CD4-positive, alpha-beta T cell (primary cell): ENCODE measurements at regions of chr1 and their contacts with region 1.

Region 1: DNA sequence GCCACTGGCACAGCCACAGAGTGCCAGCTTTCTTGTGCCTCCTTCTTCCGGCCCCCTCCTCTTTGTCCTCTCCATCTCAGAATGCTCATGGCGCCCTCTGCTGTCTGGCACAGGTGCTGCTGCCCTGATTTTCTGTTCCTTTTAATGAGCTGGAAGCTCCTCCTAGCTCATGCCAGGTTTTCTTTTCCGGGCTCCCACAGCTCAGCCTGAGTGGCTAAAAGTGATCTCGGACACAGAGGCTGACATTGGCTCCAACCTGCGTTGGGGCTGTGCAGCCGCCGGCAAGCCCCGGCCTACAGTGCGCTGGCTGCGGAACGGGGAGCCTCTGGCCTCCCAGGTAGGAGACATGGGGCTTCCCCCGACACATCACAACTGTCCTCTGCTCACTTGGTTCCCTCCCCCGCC is 18.7 kb downstream of the CNTN2 start:
- DNase-seq: peak; percentile 55 to 82 (median 70)
- ATAC-seq: peak; percentile 92
- H3K4me3 ChIP-seq: no peak overlapping the region
- H3K4me3 Mint-ChIP-seq: no peak overlapping the region
- H3K27ac ChIP-seq: no peak overlapping the region
- H3K27ac Mint-ChIP-seq: no peak overlapping the region
- H3K4me1 ChIP-seq: peaks cover 6% of the 10 kb centered on the region
- H3K4me1 Mint-ChIP-seq: no peaks in the 10 kb centered on the region
- H3K27me3 ChIP-seq: no peaks in the 10 kb centered on the region
- H3K27me3 Mint-ChIP-seq: no peaks in the 10 kb centered on the region
- CTCF ChIP-seq: peak; percentile 78

Region 2: DNA sequence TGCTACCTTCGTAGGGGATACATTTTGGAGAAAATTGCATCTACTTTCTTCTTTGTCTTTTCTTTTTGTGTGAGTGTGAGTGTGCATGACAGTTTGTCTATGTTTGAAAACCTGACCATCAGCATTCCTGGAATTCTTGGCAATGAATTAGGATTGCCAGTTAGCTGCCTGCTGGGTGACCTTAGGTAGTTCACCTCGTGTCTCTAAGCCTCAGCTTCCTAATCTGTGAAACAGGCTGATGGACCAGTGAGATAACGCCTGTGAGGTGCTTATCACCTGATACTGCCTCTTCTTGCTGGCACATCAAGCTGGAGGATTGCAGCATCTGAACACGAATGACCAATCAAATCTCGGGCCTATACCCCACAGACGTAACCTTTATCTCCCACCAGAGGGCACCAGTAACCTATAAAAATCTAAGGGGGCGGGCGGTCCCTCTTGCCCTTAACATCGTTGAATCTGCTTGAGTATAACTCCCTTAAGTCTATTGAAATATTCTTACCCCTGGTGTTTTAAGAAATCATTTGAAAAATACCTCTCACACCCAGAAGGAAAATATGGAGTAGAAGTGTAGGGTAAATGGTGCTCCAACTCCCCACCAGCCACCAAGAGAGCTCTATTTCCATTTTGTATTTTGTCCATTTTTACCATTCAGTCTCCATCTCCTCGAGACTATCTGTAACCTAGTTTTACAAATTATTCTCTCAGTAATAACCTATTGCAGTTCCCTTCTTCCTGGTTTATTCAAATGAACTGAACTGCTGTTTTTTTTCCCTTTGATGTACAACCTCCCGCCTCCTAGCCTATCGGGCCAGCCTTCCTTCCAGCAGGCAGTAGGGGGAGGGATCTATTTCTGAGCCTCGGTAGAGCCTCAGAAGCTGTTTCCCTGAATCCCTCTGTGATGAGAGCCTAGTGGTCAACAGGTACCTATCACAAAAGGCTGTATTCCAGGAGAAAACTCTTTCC is 495.8 kb before region 1 on chr1:
- CTCF ChIA-PET with region 1: interaction called, 3 read pairs
- POLR2A ChIA-PET with region 1: no interaction called
- intact Hi-C with region 1: loop called in 1 of 2 experiments (anchors 5 kb)
- DNase-seq: peak; percentile 24 to 85 (median 43)
- ATAC-seq: peak; percentile 87
- H3K4me3 ChIP-seq: no peak overlapping the region
- H3K4me3 Mint-ChIP-seq: no peak overlapping the region
- H3K27ac ChIP-seq: no peak overlapping the region
- H3K27ac Mint-ChIP-seq: peak overlapping the region; percentile 80
- H3K4me1 ChIP-seq: peaks cover 37% of the 10 kb centered on the region
- H3K4me1 Mint-ChIP-seq: peaks cover 54% of the 10 kb centered on the region
- H3K27me3 ChIP-seq: no peaks in the 10 kb centered on the region
- H3K27me3 Mint-ChIP-seq: no peaks in the 10 kb centered on the region
- CTCF ChIP-seq: peak; percentile 66

Region 3: GRCh38 chr1:204975570-204976235 is 86.0 kb before region 1 on chr1:
- CTCF ChIA-PET with region 1: interaction called, 4 read pairs
- POLR2A ChIA-PET with region 1: no interaction called
- intact Hi-C with region 1: loop called (anchors 1 to 2 kb)
- DNase-seq: peak in 13 of 14 experiments; percentile 12 to 66 (median 35)
- ATAC-seq: peak; percentile 69
- H3K4me3 ChIP-seq: no peak overlapping the region
- H3K4me3 Mint-ChIP-seq: no peak overlapping the region
- H3K27ac ChIP-seq: no peak overlapping the region
- H3K27ac Mint-ChIP-seq: no peak overlapping the region
- H3K4me1 ChIP-seq: no peaks in the 10 kb centered on the region
- H3K4me1 Mint-ChIP-seq: no peaks in the 10 kb centered on the region
- H3K27me3 ChIP-seq: peaks cover 0 to 3% of the 10 kb centered on the region in 2 experiments
- H3K27me3 Mint-ChIP-seq: peaks cover 43% of the 10 kb centered on the region
- CTCF ChIP-seq: peak; percentile 72

Region 4: GRCh38 chr1:204989266-204990058 is 72.2 kb before region 1 on chr1:
- CTCF ChIA-PET with region 1: interaction called, 13 read pairs
- POLR2A ChIA-PET with region 1: no interaction called
- intact Hi-C with region 1: loop called in 1 of 2 experiments (anchors 1 kb)
- DNase-seq: peak; percentile 7 to 71 (median 38)
- ATAC-seq: peak; percentile 77
- H3K4me3 ChIP-seq: no peak overlapping the region
- H3K4me3 Mint-ChIP-seq: no peak overlapping the region
- H3K27ac ChIP-seq: no peak overlapping the region
- H3K27ac Mint-ChIP-seq: no peak overlapping the region
- H3K4me1 ChIP-seq: peaks cover 11% of the 10 kb centered on the region
- H3K4me1 Mint-ChIP-seq: peaks cover 16% of the 10 kb centered on the region
- H3K27me3 ChIP-seq: peaks cover 0 to 2% of the 10 kb centered on the region in 2 experiments
- H3K27me3 Mint-ChIP-seq: no peaks in the 10 kb centered on the region
- CTCF ChIP-seq: peak; percentile 54

Region 5: DNA sequence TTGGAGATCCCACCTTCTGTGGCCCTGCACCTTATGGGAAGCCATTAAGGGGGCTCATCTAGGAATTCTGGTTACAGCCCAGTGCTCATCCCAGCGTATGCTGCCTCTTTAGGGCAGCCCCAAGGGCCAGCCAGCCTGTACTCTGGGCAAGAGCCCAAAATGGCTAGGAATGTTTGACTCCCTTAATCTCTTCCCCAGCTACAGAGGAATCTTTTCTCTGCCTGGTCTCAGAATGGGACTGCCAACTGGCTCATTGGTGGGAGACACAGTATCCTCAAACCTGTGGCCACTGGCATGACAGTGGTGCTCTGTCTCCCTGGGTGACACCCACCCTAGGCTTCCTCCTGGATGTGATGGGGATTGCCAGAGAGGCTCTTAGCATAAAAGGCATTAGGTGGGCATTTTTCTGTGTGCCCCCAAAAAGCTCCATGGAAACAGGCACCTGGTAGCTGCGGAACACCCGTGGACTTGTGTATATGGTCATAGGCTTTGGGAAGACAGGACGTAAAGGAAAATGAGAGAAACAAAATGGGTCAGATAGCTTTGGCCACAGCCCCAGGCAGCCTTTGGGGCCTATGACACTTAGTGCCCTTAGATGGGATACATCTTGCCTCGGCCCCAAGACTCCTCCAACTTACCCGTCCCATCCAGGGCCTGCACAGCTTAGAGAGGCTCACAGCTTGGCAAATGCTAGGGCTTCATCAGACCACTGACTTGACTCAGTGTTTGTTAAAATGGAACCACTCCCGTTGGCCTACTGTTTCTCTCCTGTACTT is 15.7 kb after region 1 on chr1:
- CTCF ChIA-PET with region 1: no interaction called
- POLR2A ChIA-PET with region 1: no interaction called
- intact Hi-C with region 1: no loop called
- DNase-seq: no peak
- ATAC-seq: no peak
- H3K4me3 ChIP-seq: no peak overlapping the region
- H3K4me3 Mint-ChIP-seq: no peak overlapping the region
- H3K27ac ChIP-seq: no peak overlapping the region
- H3K27ac Mint-ChIP-seq: no peak overlapping the region
- H3K4me1 ChIP-seq: no peaks in the 10 kb centered on the region
- H3K4me1 Mint-ChIP-seq: no peaks in the 10 kb centered on the region
- H3K27me3 ChIP-seq: no peaks in the 10 kb centered on the region
- H3K27me3 Mint-ChIP-seq: no peaks in the 10 kb centered on the region
- CTCF ChIP-seq: no peak